ENCODE measurements at regions of chr3 and their contacts with region 1.

Region 1: GRCh38 chr3:187319699-187320302 is 28.3 kb upstream of the MASP1 start:
- DNase-seq: peak; percentile 78
- ATAC-seq: peak; percentile 88
- H3K4me3 Mint-ChIP-seq: no peak overlapping the region
- H3K27ac Mint-ChIP-seq: no peak overlapping the region
- H3K4me1 Mint-ChIP-seq: peaks cover 8% of the 10 kb centered on the region
- H3K27me3 Mint-ChIP-seq: peaks cover 30% of the 10 kb centered on the region

Region 2: GRCh38 chr3:187305881-187306280 is 13.9 kb before region 1 on chr3:
- CTCF ChIA-PET with region 1: interaction called, 20 read pairs
- POLR2A ChIA-PET with region 1: interaction called, 5 read pairs
- intact Hi-C with region 1: no loop called
- DNase-seq: no peak
- ATAC-seq: no peak
- H3K4me3 Mint-ChIP-seq: no peak overlapping the region
- H3K27ac Mint-ChIP-seq: no peak overlapping the region
- H3K4me1 Mint-ChIP-seq: no peaks in the 10 kb centered on the region
- H3K27me3 Mint-ChIP-seq: peaks cover 14% of the 10 kb centered on the region

Region 3: GRCh38 chr3:187368251-187369088 is 48.7 kb after region 1 on chr3 and contains the start of gene RTP4:
- CTCF ChIA-PET with region 1: interaction called, 12 read pairs
- POLR2A ChIA-PET with region 1: no interaction called
- intact Hi-C with region 1: no loop called
- DNase-seq: peak; percentile 51
- ATAC-seq: peak; percentile 81
- H3K4me3 Mint-ChIP-seq: peak within 1 kb of the TSS; percentile 78
- H3K27ac Mint-ChIP-seq: peak within 1 kb of the TSS; percentile 93
- H3K4me1 Mint-ChIP-seq: peaks cover 27% of the 10 kb centered on the region
- H3K27me3 Mint-ChIP-seq: no peaks in the 10 kb centered on the region
- total RNA-seq, gene RTP4: 2.0 to 3.1 TPM

Region 4: DNA sequence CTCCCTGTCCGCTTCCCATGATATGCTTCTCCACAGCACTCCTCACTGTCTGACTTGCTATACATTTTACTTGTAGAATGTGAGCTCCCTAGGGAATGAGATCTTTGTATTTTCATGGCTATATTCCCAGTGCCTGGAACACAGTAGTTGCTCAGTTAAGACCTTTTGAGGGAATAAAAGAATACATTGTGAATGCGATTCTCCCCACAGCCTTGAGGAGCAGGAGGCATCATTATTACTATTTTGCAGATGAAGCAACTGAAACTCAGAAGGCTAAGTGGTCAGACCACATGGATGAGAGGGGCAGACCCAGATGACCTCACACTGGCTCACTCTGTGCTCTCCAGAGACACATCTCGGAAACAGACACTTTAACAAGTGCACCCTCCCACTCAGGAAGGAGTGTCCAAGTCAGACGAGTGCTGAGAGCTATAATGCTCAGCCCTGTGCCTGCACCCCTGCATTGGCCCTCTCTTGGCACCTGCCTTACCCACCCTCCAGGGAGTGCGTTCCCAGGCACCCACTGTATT is 303.5 kb after region 1 on chr3:
- CTCF ChIA-PET with region 1: interaction called, 14 read pairs
- POLR2A ChIA-PET with region 1: no interaction called
- intact Hi-C with region 1: no loop called
- DNase-seq: no peak
- ATAC-seq: peak; percentile 39
- H3K4me3 Mint-ChIP-seq: no peak overlapping the region
- H3K27ac Mint-ChIP-seq: no peak overlapping the region
- H3K4me1 Mint-ChIP-seq: no peaks in the 10 kb centered on the region
- H3K27me3 Mint-ChIP-seq: peaks cover 4% of the 10 kb centered on the region

Region 5: GRCh38 chr3:187702507-187703033 is 382.8 kb after region 1 on chr3 and contains the start of gene RTP2:
- CTCF ChIA-PET with region 1: interaction called, 14 read pairs
- POLR2A ChIA-PET with region 1: no interaction called
- intact Hi-C with region 1: no loop called
- DNase-seq: no peak
- ATAC-seq: no peak
- H3K4me3 Mint-ChIP-seq: no peak within 1 kb of the TSS
- H3K27ac Mint-ChIP-seq: no peak within 1 kb of the TSS
- H3K4me1 Mint-ChIP-seq: no peaks in the 10 kb centered on the region
- H3K27me3 Mint-ChIP-seq: no peaks in the 10 kb centered on the region
- total RNA-seq, gene RTP2: not detected

Measured in activated CD4-positive, alpha-beta T cell treated with anti-CD3 and anti-CD28 coated beads for 36 hours (primary cell).